ENCODE measurements at regions of chrX and their contacts with region 1.

Region 1: DNA sequence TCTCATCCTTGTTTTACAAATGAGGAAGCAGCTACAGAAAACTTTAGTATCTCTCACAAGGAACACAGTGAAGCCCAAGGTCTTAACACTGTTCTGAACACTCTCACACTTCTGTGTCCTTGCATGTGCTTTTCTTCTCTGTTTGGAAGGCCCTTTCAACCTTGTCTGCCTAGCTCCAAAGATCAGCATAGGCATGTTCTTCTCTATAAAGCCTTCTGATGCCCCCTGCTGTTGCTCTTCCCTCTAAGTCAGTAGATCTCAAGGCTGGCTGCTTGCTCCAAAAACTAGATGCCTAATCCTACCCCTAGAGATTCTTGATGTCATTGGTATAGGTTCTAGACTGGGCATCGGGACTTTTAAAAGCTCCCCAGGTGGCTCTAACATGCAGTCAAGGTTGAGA is 5.9 kb downstream of the APOO start:
- DNase-seq: peak in 3 of 10 donors; percentile 3 to 55 (median 40)

Region 2: DNA sequence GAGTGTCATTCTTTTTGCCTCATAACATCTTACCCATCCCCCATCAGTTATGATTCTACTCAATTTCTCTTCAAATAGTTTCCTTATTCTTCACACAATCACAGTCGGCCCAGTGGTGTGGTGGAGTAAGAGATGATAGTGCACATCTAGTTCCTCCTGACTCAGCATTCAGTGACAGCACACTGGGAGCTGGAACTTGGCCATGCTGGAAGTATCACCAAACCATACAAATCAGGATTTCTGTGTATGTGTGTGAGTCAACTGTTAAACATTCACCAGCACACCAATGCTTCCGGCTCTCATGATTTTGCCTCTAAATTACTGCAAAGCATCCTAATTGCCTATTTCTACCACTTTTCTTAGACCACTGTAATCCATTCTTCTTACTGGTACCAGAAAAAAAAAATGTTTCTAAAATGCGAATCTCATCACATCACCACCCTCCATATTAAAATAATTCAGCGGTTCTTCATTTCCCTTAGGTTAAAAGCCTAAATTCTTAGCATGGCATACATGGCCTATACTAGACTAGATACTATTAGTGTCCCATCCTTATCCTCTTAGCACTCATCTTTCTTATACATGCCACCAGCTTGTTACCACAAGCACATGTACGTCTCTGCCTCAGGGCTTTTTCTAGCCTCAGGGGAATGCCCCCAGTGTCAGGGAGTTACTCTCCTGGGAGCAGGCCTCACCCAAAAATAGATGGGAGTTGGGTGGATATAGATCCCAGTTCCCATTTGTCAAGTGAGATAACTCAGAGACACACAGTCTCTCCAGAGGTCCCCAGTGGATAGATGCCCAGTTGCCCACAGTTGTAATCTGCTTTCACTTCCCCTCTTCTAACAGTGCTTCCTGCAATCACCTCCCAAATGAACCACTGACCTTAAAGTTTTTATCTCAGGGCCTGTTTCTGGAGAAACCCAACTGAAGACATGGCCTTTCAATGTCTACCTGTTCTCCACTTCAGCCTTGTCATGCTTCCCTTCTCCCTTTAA is 951.2 kb before region 1 on chrX:
- intact Hi-C with region 1: no loop called
- DNase-seq: no peak

Region 3: GRCh38 chrX:23694606-23695005 is 207.2 kb before region 1 on chrX:
- intact Hi-C with region 1: loop called (anchors 2 kb)
- DNase-seq: peak in 7 of 10 donors; percentile 27 to 89 (median 48)

Region 4: GRCh38 chrX:23782863-23783568 is 118.8 kb before region 1 on chrX and contains the start of gene SAT1:
- intact Hi-C with region 1: loop called (anchors 1 kb)
- DNase-seq: peak; percentile 88 to 99 (median 94)

Region 5: GRCh38 chrX:24241822-24242648 is 340.2 kb after region 1 on chrX:
- intact Hi-C with region 1: no loop called
- DNase-seq: no peak

Measured in posterior cingulate gyrus (tissue), 11 donors.